ENCODE measurements at regions of chr17 and their contacts with region 1.

Region 1: GRCh38 chr17:66673668-66674315 is 161.1 kb upstream of the CACNG5 start:
- DNase-seq: peak; percentile 20 to 90 (median 44)
- ATAC-seq: peak; percentile 84
- H3K4me3 ChIP-seq: no peak overlapping the region
- H3K4me3 Mint-ChIP-seq: peak overlapping the region; percentile 52
- H3K27ac ChIP-seq: peak overlapping the region; percentile 51 to 78
- H3K27ac Mint-ChIP-seq: peak overlapping the region; percentile 88
- H3K4me1 ChIP-seq: peaks cover 22% of the 10 kb centered on the region
- H3K4me1 Mint-ChIP-seq: peaks cover 55% of the 10 kb centered on the region
- H3K27me3 ChIP-seq: no peaks in the 10 kb centered on the region
- H3K27me3 Mint-ChIP-seq: no peaks in the 10 kb centered on the region
- CTCF ChIP-seq: peak; percentile 68

Region 2: DNA sequence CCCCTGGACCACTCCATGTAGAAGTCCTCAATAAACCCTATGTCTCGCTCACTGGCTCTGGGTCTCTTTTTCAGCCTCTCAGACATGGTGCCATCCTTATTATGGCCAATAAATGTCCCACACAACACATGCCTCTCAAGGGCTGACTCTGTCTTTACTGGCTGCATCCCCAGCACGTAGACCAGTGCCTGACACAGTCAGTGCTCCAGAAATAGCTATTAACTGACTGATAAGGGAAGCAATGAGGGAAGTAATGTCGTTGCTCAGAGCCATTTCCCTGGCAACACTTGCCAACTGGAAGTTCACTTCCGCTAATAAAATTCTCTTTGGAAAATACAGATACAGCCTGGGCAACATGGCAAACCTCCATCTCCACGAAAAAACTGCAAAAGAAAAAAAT is 425.5 kb before region 1 on chr17:
- CTCF ChIA-PET with region 1: no interaction called
- POLR2A ChIA-PET with region 1: no interaction called
- intact Hi-C with region 1: loop called in 1 of 2 experiments (anchors 2 kb)
- DNase-seq: no peak
- ATAC-seq: no peak
- H3K4me3 ChIP-seq: no peak overlapping the region
- H3K4me3 Mint-ChIP-seq: no peak overlapping the region
- H3K27ac ChIP-seq: no peak overlapping the region
- H3K27ac Mint-ChIP-seq: peak overlapping the region; percentile 61
- H3K4me1 ChIP-seq: peaks cover 36% of the 10 kb centered on the region
- H3K4me1 Mint-ChIP-seq: peaks cover 38% of the 10 kb centered on the region
- H3K27me3 ChIP-seq: no peaks in the 10 kb centered on the region
- H3K27me3 Mint-ChIP-seq: no peaks in the 10 kb centered on the region
- CTCF ChIP-seq: no peak

Region 3: DNA sequence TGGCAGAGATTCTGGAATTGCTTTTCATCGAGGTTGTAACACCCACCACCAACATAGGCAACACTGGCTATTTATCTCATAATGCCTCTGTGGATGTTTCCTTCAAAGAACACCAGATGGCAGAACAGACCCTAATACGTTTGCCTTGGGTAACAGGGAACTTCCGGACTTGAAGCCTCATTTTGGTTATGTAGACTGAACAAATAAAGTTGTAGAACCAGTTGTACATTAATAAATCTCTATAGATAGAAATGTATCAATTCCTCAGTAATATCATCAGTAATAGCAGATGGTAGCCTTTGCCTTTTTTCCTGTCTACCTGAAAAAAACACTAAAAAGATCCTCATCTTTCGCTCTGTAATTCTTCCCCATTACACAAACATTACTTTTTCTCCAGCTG is 418.7 kb before region 1 on chr17:
- CTCF ChIA-PET with region 1: interaction called, 4 read pairs
- POLR2A ChIA-PET with region 1: no interaction called
- intact Hi-C with region 1: loop called (anchors 1 kb)
- DNase-seq: peak in 8 of 14 experiments; percentile 21 to 87 (median 42)
- ATAC-seq: peak; percentile 95
- H3K4me3 ChIP-seq: no peak overlapping the region
- H3K4me3 Mint-ChIP-seq: peak overlapping the region; percentile 59
- H3K27ac ChIP-seq: peak overlapping the region in 1 of 2 donors; percentile 15
- H3K27ac Mint-ChIP-seq: peak overlapping the region; percentile 82
- H3K4me1 ChIP-seq: peaks cover 8% of the 10 kb centered on the region
- H3K4me1 Mint-ChIP-seq: peaks cover 23% of the 10 kb centered on the region
- H3K27me3 ChIP-seq: no peaks in the 10 kb centered on the region
- H3K27me3 Mint-ChIP-seq: no peaks in the 10 kb centered on the region
- CTCF ChIP-seq: peak; percentile 82

Region 4: DNA sequence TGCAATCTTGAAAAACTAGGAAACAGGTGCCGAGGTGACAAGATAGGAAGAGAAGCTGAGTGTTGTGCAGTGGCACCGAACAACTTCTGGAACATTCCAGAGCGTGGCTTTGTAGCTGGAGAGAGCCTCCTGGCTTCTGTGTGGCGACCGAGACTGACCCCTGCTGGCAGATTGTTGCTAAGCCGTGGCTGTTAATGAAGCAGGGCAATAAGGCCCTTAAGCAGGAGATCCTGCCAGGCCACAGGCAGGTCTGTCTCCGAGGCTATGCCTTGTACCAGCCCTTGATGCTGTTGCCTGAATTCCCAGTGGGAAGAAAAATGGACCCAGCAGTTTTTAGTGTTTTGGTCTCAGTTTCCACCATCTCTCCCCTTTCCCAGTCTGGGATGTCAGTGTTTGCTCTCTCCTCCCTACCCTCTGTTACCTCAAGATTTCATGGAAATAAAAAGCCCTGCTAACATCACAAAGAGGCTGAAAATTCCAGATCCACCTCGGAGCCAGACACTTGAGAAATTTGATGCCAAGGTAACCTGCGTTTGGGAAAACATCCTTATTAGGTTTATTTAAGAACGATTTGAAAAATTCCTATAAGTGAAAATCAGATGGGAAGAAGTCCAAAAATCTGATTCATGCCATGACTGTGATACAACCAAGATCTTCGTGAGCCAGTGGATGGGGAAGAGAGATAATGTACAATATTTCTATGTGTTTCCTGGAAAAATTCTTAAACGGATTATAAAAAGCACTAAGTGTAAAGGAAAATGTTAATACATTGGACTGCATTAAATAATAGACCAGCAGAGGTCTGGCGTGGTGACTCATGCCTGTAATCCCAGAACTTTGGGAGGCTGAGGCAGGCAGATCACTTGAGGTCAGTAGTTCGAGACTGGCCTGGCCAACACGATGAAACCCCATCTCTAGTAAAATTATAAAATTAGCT is 106.3 kb before region 1 on chr17:
- CTCF ChIA-PET with region 1: interaction called, 3 read pairs
- POLR2A ChIA-PET with region 1: no interaction called
- intact Hi-C with region 1: loop called (anchors 5 to 10 kb)
- DNase-seq: peak; percentile 71 to 90 (median 80)
- ATAC-seq: peak; percentile 88
- H3K4me3 ChIP-seq: no peak overlapping the region
- H3K4me3 Mint-ChIP-seq: no peak overlapping the region
- H3K27ac ChIP-seq: no peak overlapping the region
- H3K27ac Mint-ChIP-seq: peak overlapping the region; percentile 7
- H3K4me1 ChIP-seq: peaks cover 5% of the 10 kb centered on the region
- H3K4me1 Mint-ChIP-seq: peaks cover 41% of the 10 kb centered on the region
- H3K27me3 ChIP-seq: no peaks in the 10 kb centered on the region
- H3K27me3 Mint-ChIP-seq: no peaks in the 10 kb centered on the region
- CTCF ChIP-seq: peak; percentile 87

Region 5: GRCh38 chr17:66633317-66633965 is 40.4 kb before region 1 on chr17:
- CTCF ChIA-PET with region 1: no interaction called
- POLR2A ChIA-PET with region 1: no interaction called
- intact Hi-C with region 1: loop called in 1 of 2 experiments (anchors 1 kb)
- DNase-seq: peak in 7 of 14 experiments; percentile 7 to 56 (median 37)
- ATAC-seq: peak; percentile 89
- H3K4me3 ChIP-seq: no peak overlapping the region
- H3K4me3 Mint-ChIP-seq: no peak overlapping the region
- H3K27ac ChIP-seq: no peak overlapping the region
- H3K27ac Mint-ChIP-seq: peak overlapping the region; percentile 31
- H3K4me1 ChIP-seq: peaks cover 8% of the 10 kb centered on the region
- H3K4me1 Mint-ChIP-seq: peaks cover 62% of the 10 kb centered on the region
- H3K27me3 ChIP-seq: no peaks in the 10 kb centered on the region
- H3K27me3 Mint-ChIP-seq: no peaks in the 10 kb centered on the region
- CTCF ChIP-seq: no peak

Measured in CD4-positive, alpha-beta T cell (primary cell).